H1 (cell line): ENCODE measurements at regions of chr14 and their contacts with region 1.

Region 1: GRCh38 chr14:20317720-20318119 is 12.0 kb upstream of the TTC5 start:
- DNase-seq: no peak
- H3K4me3 ChIP-seq: no peak overlapping the region
- H3K27ac ChIP-seq: no peak overlapping the region
- H3K4me1 ChIP-seq: no peaks in the 10 kb centered on the region
- H3K27me3 ChIP-seq: no peaks in the 10 kb centered on the region; a peak in 1 of 7 replicates
- CTCF ChIP-seq: no peak
- EP300 ChIP-seq: no peak
- POLR2A ChIP-seq: peak; percentile 38 to 61
- RAD21 ChIP-seq: no peak

Region 2: GRCh38 chr14:20332788-20333493 is 15.2 kb after region 1 on chr14 and contains the start of gene CCNB1IP1:
- CTCF ChIA-PET with region 1: interaction called, 25 read pairs
- POLR2A ChIA-PET with region 1: interaction called, 67 read pairs
- DNase-seq: peak; percentile 13 to 61
- H3K4me3 ChIP-seq: peak within 1 kb of the TSS; percentile 85 to 98 (median 94)
- H3K27ac ChIP-seq: peak within 1 kb of the TSS; percentile 87
- H3K4me1 ChIP-seq: peaks cover 0 to 3% (median 0%) of the 10 kb centered on the region in 4 experiments; a peak in 3 of 7 replicates
- H3K27me3 ChIP-seq: no peaks in the 10 kb centered on the region
- CTCF ChIP-seq: no peak
- EP300 ChIP-seq: no peak
- POLR2A ChIP-seq: peak; percentile 81 to 99
- RAD21 ChIP-seq: no peak
- total RNA-seq, gene CCNB1IP1: 156 and 173 TPM in 2 replicates